ENCODE measurements at regions of chr2 and their contacts with region 1.

Region 1: GRCh38 chr2:223148516-223148915 is 96.5 kb downstream of the KCNE4 start:
- DNase-seq: no peak
- CTCF ChIP-seq: no peak

Region 2: GRCh38 chr2:223108351-223109050 is 40.0 kb before region 1 on chr2:
- CTCF ChIA-PET with region 1: no interaction called
- POLR2A ChIA-PET with region 1: no interaction called
- DNase-seq: no peak
- CTCF ChIP-seq: no peak

Region 3: GRCh38 chr2:223161873-223162458 is 13.4 kb after region 1 on chr2:
- CTCF ChIA-PET with region 1: interaction called, 10 read pairs
- POLR2A ChIA-PET with region 1: no interaction called
- DNase-seq: no peak
- CTCF ChIP-seq: no peak

Region 4: DNA sequence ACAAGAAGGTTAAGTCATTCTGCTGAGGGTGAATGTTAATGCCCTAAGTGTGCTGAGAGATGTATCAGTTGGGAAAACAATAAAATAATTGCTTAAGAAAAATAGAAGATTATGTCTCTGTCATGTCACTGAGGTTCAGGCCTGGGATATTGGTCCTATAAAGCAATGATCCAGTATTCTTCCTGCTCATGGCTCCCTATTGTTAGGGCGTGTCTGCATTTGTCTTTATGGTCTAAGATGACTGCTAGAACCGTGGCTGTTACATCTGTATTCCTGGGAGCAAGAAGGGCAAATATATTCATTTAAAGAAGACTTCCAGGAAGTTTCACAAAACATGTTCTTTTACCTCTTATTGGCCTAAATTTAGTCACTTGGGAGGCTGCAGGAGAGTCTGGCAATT is 28.5 kb after region 1 on chr2:
- CTCF ChIA-PET with region 1: no interaction called
- POLR2A ChIA-PET with region 1: no interaction called
- DNase-seq: no peak
- CTCF ChIP-seq: no peak

Region 5: GRCh38 chr2:223197046-223197445 is 48.5 kb after region 1 on chr2:
- CTCF ChIA-PET with region 1: no interaction called
- POLR2A ChIA-PET with region 1: no interaction called
- DNase-seq: no peak
- CTCF ChIP-seq: no peak